Calu3 (cell line): ENCODE measurements at regions of chr2 and their contacts with region 1.

Region 1: DNA sequence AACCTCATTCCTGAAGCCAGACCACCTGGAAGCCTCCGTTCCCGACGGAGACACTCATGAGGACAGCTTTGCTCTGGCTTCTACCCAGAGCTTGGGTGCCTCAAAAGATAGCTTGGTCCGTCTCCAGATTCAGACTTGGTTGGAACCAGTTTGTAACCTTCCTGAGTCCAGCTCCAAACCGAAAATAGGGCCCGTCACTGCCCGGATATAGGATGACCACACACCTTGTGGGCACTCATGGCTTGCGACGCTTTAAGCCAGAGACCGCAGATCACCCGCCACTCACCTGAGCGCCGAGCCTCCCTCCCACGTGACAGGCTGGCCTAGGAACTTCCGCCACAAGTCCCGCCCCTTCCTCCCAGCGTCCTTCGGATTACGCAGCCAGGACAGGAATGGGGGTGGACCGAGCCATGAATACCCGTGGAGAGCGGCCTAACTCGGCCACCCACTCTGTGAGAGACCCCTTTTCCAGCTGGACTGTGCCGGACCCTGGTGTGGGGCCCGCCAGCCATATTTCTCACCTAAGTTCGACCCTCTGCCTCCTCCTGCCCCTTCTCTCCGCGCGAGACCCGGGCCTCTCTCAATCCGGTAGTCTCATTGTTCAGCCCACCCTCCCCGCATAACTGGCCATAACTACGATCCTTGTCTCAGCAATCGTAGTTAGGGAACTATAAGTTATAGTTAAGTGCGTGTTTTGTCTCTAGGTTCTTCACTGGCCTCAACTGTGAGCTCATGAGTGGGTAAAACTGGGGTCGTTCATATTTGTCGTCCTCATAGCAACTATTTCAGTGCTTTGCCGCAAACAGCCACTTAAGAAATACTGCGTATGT is at the start of gene MPV17:
- DNase-seq: peak; percentile 93
- H3K4me3 Mint-ChIP-seq: peak within 1 kb of the TSS; percentile 91
- H3K27ac Mint-ChIP-seq: peak within 1 kb of the TSS; percentile 96
- H3K4me1 Mint-ChIP-seq: peaks cover 20% of the 10 kb centered on the region
- H3K27me3 Mint-ChIP-seq: no peaks in the 10 kb centered on the region
- CTCF ChIP-seq: no peak
- total RNA-seq, gene MPV17: 77.4 and 84.5 TPM in 2 replicates

Region 2: DNA sequence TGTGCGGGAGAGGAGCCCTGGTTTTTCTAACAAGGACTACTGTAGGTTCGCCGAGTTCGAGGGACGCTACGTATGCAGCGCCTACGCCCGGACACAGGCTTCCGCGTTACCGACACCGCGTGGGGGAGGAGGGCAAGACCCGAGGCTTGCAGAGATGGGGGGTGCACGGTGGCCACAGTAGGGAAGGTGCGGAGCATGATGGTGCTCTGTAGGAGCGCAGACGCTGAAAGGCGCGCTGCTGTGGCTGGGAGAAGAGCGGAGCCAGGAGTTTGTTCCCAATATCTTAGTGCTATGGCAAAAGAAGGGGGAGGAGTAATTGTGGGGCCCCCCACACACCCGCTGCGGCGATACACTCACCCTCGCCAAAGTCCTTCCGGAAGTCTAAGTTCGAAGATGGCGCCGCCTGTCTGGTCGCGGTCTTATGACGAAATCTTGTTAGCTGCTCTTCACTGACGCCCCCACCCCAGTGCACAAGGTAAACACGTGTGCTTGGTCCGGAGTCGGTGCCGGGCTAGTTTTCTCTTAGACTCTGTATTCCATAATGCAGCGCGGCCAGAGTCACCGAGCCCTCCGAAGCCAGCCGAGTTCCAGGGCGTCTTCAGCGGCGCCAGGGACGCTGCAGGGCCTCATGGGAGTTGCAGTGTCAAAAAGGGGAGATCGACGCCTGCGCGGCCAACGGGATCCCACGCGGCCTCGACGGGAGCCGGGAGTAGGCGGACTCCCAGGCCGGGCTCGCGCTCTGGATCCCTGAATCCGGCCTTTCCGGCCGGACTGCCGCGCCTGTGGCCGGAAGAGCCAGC is 33.6 kb after region 1 on chr2 and contains the start of gene GTF3C2:
- CTCF ChIA-PET with region 1: interaction called, 3 read pairs
- intact Hi-C with region 1: loop called (anchors 5 kb)
- DNase-seq: peak; percentile 94
- H3K4me3 Mint-ChIP-seq: peak within 1 kb of the TSS; percentile 92
- H3K27ac Mint-ChIP-seq: peak within 1 kb of the TSS; percentile 96
- H3K4me1 Mint-ChIP-seq: peaks cover 32% of the 10 kb centered on the region
- H3K27me3 Mint-ChIP-seq: no peaks in the 10 kb centered on the region
- CTCF ChIP-seq: no peak
- total RNA-seq, gene GTF3C2: 83.8 and 85.4 TPM in 2 replicates

Region 3: GRCh38 chr2:27370026-27370815 is 47.2 kb after region 1 on chr2 and contains the starts of genes EIF2B4 and SNX17:
- CTCF ChIA-PET with region 1: no interaction called
- intact Hi-C with region 1: loop called (anchors 1 kb)
- DNase-seq: peak; percentile 99
- H3K4me3 Mint-ChIP-seq: peak within 1 kb of the TSS; percentile 83
- H3K27ac Mint-ChIP-seq: peak within 1 kb of the TSS; percentile 87
- H3K4me1 Mint-ChIP-seq: peaks cover 17% of the 10 kb centered on the region
- H3K27me3 Mint-ChIP-seq: no peaks in the 10 kb centered on the region
- CTCF ChIP-seq: peak; percentile 55
- total RNA-seq, gene EIF2B4: 42.0 and 43.7 TPM in 2 replicates
- total RNA-seq, gene SNX17: 85.3 and 96.9 TPM in 2 replicates

Region 4: GRCh38 chr2:27380626-27381545 is 57.9 kb after region 1 on chr2 and contains the start of gene ZNF513:
- CTCF ChIA-PET with region 1: no interaction called
- intact Hi-C with region 1: no loop called
- DNase-seq: peak; percentile 90
- H3K4me3 Mint-ChIP-seq: peak within 1 kb of the TSS; percentile 72
- H3K27ac Mint-ChIP-seq: peak within 1 kb of the TSS; percentile 93
- H3K4me1 Mint-ChIP-seq: peaks cover 15% of the 10 kb centered on the region
- H3K27me3 Mint-ChIP-seq: no peaks in the 10 kb centered on the region
- CTCF ChIP-seq: no peak
- total RNA-seq, gene ZNF513: 10.6 and 13.1 TPM in 2 replicates